ENCODE measurements at regions of chr17 and their contacts with region 1.

Region 1: DNA sequence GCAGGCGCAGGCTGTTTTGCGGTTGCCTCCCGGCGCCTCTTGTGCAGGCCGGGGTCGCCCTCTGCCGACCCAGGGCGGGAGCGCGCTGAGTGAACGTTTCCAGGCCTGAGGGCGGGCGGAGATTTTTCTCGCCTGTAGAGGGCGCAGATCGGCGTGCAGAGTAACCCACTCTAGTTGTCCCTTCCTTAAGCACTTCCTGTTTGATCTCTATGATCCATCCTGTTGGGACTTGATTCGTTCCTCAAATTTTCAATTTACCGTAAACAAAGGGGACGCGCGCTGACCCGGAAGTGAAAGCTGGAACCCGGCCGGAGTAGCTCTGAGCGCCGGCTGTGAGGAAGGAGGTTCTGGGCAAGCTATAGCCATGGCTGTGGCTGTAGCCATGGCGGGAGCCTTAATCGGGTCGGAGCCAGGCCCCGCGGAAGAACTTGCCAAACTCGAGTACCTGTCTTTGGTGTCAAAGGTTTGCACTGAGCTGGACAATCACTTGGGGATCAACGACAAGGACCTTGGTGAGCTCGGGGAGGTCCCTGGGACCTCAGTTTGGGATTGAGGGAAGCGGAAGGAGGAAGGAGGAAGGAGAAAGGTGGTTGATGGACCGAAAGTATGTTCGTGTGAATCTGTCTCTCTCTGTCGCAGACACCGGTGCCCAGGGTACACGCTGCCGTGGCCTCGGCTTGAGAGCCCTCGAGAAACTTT is at the start of gene DHX8:
- DNase-seq: peak; percentile 100
- ATAC-seq: peak; percentile 94
- H3K4me3 ChIP-seq: peak within 1 kb of the TSS; percentile 76 to 85 (median 78)
- H3K27ac ChIP-seq: peak within 1 kb of the TSS; percentile 73
- H3K4me1 ChIP-seq: peaks cover 75% of the 10 kb centered on the region
- H3K27me3 ChIP-seq: no peaks in the 10 kb centered on the region; a peak in 1 of 5 replicates
- CTCF ChIP-seq: peak; percentile 100
- EP300 ChIP-seq: peak; percentile 51 to 66
- POLR2A ChIP-seq: peak; percentile 83 to 92
- RAD21 ChIP-seq: peak; percentile 100
- total RNA-seq, gene DHX8: 48.9 and 66.9 TPM in 2 replicates

Region 2: DNA sequence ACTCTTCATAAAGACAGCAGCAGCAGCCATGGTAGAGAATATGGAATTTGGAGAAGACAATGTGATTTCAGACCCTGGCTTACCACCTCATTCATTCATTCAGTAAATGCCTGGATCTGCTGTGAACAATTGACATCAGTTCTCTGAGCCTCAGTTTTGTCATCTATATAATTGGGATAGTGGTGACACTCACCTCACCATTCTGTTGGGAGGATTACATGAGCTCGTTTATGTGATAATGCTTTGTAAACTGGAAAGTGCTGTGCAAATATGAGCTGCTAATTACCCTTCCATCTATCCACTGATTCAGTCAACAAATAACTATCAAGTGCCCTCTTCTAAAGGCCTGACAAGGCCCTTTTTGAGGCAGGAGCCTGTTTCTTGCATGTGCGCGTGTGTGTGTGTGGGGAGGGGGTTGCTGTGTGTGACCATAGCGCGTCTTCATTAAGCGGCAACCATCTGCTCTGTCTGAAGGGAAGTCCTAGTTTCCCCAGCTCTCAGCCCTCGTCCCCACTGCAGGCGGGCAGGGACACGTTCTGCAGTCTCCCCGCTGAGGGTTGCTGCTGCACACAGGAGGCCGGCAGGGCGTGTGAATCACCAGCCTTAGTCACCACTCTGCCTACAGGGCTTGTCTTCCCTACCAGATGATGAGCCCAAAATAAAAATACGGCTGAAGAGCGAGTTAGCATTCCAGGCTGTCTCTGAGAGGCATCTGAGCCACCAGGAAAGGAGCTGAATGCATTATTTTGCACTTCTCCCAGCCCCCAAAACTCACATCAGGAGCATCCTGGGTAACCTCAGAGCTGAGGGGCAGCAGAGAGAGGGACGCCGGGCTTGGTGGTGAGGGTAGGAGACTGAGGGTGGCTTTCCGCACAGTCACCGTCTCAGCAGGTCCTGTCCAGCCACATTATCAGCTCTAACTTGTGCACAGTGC is 65.1 kb before region 1 on chr17:
- CTCF ChIA-PET with region 1: interaction called, 9 read pairs
- POLR2A ChIA-PET with region 1: interaction called, 18 read pairs
- in situ Hi-C with region 1: no loop called
- intact Hi-C with region 1: no loop called
- DNase-seq: peak; percentile 56
- ATAC-seq: peak; percentile 97
- H3K4me3 ChIP-seq: peak overlapping the region; percentile 32 to 65 (median 32); a peak in 5 of 6 replicates
- H3K27ac ChIP-seq: peak overlapping the region; percentile 4
- H3K4me1 ChIP-seq: peaks cover 34% of the 10 kb centered on the region
- H3K27me3 ChIP-seq: peaks cover 7 to 46% of the 10 kb centered on the region in 2 experiments; a peak in 4 of 5 replicates
- CTCF ChIP-seq: peak; percentile 57
- EP300 ChIP-seq: no peak
- POLR2A ChIP-seq: no peak
- RAD21 ChIP-seq: peak; percentile 32; the same call in 1 of the 2 replicates

Region 3: GRCh38 chr17:43449470-43450248 is 34.2 kb before region 1 on chr17:
- CTCF ChIA-PET with region 1: interaction called, 8 read pairs
- POLR2A ChIA-PET with region 1: interaction called, 13 read pairs
- in situ Hi-C with region 1: no loop called
- intact Hi-C with region 1: no loop called
- DNase-seq: peak; percentile 97
- ATAC-seq: peak; percentile 96
- H3K4me3 ChIP-seq: peak overlapping the region; percentile 15 to 52 (median 32); a peak in 5 of 6 replicates
- H3K27ac ChIP-seq: peak overlapping the region; percentile 89
- H3K4me1 ChIP-seq: peaks cover 52% of the 10 kb centered on the region
- H3K27me3 ChIP-seq: no peaks in the 10 kb centered on the region
- CTCF ChIP-seq: peak; percentile 1; the same call in 1 of the 2 replicates
- EP300 ChIP-seq: peak; percentile 82 to 91
- POLR2A ChIP-seq: no peak
- RAD21 ChIP-seq: no peak

Region 4: GRCh38 chr17:43467981-43468581 is 15.7 kb before region 1 on chr17:
- CTCF ChIA-PET with region 1: no interaction called
- POLR2A ChIA-PET with region 1: interaction called, 35 read pairs
- in situ Hi-C with region 1: no loop called
- intact Hi-C with region 1: loop called (anchors 2 kb)
- DNase-seq: no peak
- ATAC-seq: no peak
- H3K4me3 ChIP-seq: no peak overlapping the region
- H3K27ac ChIP-seq: peak overlapping the region; percentile 94
- H3K4me1 ChIP-seq: peaks cover 79% of the 10 kb centered on the region
- H3K27me3 ChIP-seq: no peaks in the 10 kb centered on the region
- CTCF ChIP-seq: no peak
- EP300 ChIP-seq: no peak
- POLR2A ChIP-seq: no peak
- RAD21 ChIP-seq: no peak

Region 5: DNA sequence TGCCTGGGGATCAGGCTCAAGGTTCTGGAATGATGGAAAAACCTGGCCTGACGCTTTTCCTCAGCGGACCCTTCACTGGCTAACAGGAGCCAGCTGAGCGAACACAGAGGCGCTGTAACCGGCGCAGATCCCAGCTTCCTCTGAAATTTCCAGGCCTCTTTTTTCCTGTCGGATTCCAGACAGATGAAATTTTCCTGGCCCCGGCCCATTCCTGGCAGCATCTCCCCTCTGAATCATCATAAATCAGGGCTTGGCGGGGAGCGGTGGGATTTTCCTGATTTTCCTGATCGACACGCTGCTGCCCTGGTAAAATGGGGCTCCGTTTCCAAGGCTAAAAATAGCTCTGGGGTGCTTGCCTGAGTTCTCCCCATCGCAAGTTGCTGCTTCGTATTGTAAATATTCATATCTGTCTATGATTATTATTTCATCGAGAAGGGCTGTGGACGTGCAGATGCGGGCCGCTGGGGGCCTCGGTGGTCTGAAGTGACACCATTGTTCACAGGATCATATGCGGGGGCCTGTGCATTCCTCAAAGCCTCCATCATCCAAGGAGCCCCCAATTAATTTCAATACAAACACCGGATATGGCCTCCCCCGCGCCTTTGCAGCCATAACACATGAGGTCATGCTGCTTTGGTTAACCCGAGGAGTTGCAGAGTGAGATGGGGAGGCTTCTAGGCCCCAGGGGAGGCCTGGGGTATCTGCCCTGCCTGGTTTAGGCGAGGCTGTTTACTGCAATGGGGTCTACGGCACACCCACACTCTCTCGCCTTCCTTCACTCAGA is 108.1 kb after region 1 on chr17:
- CTCF ChIA-PET with region 1: no interaction called
- POLR2A ChIA-PET with region 1: no interaction called
- in situ Hi-C with region 1: no loop called
- intact Hi-C with region 1: no loop called
- DNase-seq: no peak
- ATAC-seq: no peak
- H3K4me3 ChIP-seq: no peak overlapping the region
- H3K27ac ChIP-seq: no peak overlapping the region
- H3K4me1 ChIP-seq: peaks cover 41% of the 10 kb centered on the region
- H3K27me3 ChIP-seq: no peaks in the 10 kb centered on the region
- CTCF ChIP-seq: no peak
- EP300 ChIP-seq: no peak
- POLR2A ChIP-seq: no peak
- RAD21 ChIP-seq: no peak